Activated CD8-positive, alpha-beta memory T cell treated with anti-CD3 and anti-CD28 coated beads, Interleukin-2, amount 10 ng/mL, durations not matched to agents 7 days and 5 days (primary cell): ENCODE measurements at regions of chr17 and their contacts with region 1.

Region 1: GRCh38 chr17:28951991-28952975 is 965 bp upstream of the PHF12 start:
- DNase-seq: peak; percentile 98
- ATAC-seq: peak; percentile 73
- H3K4me3 Mint-ChIP-seq: no peak overlapping the region
- H3K27ac Mint-ChIP-seq: no peak overlapping the region
- H3K4me1 Mint-ChIP-seq: peaks cover 16% of the 10 kb centered on the region
- H3K27me3 Mint-ChIP-seq: no peaks in the 10 kb centered on the region

Region 2: DNA sequence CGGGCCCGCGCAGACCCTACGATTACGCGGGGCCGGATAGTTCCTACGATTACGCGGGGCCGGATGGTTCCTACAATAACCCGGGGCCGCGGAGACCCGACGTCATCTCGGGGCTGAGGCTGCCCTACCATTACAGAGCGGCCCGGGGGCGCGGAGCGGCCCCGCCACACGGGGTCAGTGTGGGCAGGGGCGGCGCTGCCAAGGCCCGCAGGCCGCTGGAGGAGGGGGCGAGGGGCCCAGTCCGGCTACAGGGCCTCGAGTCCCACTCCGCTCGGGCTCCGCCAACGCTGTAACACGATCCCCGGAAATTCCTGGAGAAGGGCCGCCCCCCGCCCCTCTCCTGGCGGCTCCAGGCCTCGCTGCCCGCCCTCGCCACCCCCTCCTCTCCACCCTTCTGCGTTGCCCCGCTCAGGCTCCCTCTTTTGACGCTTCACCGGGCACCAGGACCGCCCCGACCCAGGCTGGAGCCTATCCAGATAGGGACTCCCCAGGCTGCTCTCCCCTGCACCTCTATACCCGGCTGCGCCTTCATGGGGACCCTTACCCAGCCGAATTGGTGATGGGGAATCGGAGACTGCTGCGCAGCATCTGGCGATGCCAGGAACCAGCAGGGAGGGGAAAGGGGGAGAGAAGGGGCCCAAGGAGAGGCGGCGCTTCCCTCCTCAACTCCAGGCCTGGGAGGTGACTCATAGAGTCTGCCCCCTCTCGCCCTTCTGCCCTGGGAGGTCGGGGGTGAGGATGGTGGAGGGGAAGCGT is 234.5 kb before region 1 on chr17 and contains the start of gene RAB34:
- CTCF ChIA-PET with region 1: interaction called, 28 read pairs
- DNase-seq: no peak
- ATAC-seq: no peak
- H3K4me3 Mint-ChIP-seq: peak within 1 kb of the TSS; percentile 40
- H3K27ac Mint-ChIP-seq: peak within 1 kb of the TSS; percentile 24
- H3K4me1 Mint-ChIP-seq: peaks cover 29% of the 10 kb centered on the region
- H3K27me3 Mint-ChIP-seq: peaks cover 36% of the 10 kb centered on the region
- total RNA-seq, gene RAB34: 5.6 to 8.3 TPM

Region 3: DNA sequence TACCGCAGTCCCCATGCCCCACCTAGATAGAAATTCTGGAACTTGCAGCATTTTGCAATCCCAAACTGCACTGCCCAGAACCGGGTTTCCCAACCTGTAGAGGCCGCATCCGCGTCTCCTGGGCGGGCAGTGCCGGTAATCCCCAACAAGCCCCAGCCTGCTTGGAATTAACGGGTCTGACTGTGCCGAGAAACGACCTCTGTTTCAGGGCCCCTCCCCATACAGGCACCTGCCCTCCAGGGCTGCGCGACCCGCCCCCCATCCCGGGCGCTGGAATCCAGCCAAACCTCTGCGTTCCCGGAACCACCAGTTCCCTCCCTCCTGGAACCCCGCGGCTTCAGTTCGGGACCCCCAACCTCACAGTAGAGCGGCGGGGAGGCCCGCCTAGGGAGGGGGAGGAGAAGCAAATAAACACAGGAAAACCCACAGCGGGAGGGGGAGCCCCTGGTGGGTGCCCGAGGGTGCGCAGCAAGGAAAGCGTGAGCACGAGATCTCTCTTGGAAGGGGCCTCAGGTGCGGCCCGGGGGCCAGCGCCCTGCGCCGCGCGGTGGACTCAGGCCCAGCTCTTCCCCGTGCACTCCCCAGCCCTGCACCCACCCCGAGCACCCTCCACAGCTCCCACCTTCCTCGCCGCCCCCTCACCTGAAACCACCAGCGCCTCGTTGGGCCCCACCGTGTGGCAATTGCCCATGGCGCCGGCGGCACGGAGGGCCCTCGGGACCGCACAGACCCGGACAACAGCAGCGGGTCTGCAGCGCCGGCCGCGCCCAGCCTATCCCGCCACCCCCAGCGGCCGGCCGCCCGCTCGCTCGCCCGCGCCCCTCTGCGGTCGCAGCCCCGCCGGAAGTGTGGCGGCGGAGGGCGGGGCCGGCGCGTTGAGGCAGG is 55.2 kb before region 1 on chr17 and contains the start of gene FLOT2:
- CTCF ChIA-PET with region 1: interaction called, 18 read pairs
- DNase-seq: peak; percentile 78
- ATAC-seq: peak; percentile 69
- H3K4me3 Mint-ChIP-seq: peak within 1 kb of the TSS; percentile 91
- H3K27ac Mint-ChIP-seq: peak within 1 kb of the TSS; percentile 93
- H3K4me1 Mint-ChIP-seq: peaks cover 63% of the 10 kb centered on the region
- H3K27me3 Mint-ChIP-seq: no peaks in the 10 kb centered on the region
- total RNA-seq, gene FLOT2: 143 to 191 TPM

Region 4: DNA sequence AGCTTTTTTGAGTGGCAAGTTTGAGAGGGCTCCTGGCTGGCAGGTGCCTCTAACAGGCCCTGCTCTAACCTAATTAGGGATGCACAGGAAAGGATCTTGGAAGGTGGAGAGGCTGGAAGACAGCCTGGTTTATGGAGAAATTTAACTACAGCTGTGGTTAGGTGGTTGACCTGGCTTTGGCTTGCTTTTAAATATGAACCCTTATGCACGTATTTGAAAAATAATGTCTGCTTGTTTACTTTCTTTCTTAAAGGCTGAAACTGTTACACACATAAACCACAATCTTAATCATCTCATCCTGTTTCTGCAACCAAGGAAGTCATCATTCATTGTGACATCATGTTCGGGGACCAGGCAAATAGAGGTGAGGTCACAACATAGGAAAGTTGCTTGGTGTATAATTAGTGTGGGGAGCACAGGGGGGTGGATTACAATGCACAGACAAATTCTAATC is 26.3 kb before region 1 on chr17:
- CTCF ChIA-PET with region 1: interaction called, 34 read pairs
- DNase-seq: peak; percentile 73
- ATAC-seq: peak; percentile 93
- H3K4me3 Mint-ChIP-seq: peak overlapping the region; percentile 38
- H3K27ac Mint-ChIP-seq: peak overlapping the region; percentile 77
- H3K4me1 Mint-ChIP-seq: peaks cover 55% of the 10 kb centered on the region
- H3K27me3 Mint-ChIP-seq: no peaks in the 10 kb centered on the region

Region 5: DNA sequence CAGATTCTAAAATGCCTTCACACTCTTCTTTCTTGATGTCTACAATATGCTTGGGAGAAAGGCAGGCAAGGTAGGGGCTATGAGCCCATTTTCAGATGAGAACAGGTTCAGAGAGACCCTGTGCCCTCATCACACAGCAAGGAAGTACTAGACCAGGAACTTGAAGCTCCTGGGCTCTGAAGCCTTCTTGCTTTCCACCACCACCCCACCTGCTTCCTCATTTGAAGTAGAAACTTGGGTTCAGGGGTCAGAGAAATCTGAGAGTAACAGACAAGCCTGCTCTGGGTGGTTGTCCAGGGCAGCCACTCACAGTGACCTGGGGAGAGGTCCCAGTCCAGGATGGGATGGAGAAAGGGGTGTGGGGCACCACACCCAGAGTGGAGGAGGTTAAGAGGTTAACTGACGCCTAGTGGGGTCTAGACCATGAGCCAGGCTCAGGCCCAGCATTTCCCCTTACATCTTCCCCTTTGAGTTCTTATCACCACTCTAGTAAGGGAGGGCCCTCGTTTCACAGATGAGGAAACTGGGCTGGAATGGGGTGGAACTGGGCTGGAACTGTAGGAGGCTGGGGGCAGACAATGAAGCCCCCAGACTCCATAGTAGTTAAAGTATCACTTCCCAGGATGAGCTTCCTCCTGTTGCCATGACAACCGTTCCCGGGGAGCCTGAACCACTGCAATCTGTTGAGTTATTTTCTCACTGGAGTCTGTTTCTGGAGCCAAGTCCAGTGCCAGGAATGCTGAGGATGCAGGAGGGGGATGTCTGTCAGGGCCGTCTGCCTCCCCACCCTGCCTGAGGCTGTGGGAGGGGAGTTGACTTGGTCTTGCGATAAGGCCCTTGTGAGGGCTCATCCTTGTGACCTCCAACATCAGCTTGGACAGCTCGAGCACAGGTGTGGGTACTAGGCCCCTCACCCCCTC is 15.2 kb after region 1 on chr17:
- CTCF ChIA-PET with region 1: interaction called, 49 read pairs
- DNase-seq: no peak
- ATAC-seq: no peak
- H3K4me3 Mint-ChIP-seq: no peak overlapping the region
- H3K27ac Mint-ChIP-seq: no peak overlapping the region
- H3K4me1 Mint-ChIP-seq: no peaks in the 10 kb centered on the region
- H3K27me3 Mint-ChIP-seq: peaks cover 16% of the 10 kb centered on the region

Region 6: GRCh38 chr17:28992625-28993600 is 40.6 kb after region 1 on chr17:
- CTCF ChIA-PET with region 1: no interaction called
- DNase-seq: no peak
- ATAC-seq: peak; percentile 20
- H3K4me3 Mint-ChIP-seq: no peak overlapping the region
- H3K27ac Mint-ChIP-seq: no peak overlapping the region
- H3K4me1 Mint-ChIP-seq: no peaks in the 10 kb centered on the region
- H3K27me3 Mint-ChIP-seq: peaks cover 2% of the 10 kb centered on the region

Region 7: GRCh38 chr17:29096094-29096493 is 143.8 kb after region 1 on chr17:
- CTCF ChIA-PET with region 1: no interaction called
- DNase-seq: no peak
- ATAC-seq: no peak
- H3K4me3 Mint-ChIP-seq: no peak overlapping the region
- H3K27ac Mint-ChIP-seq: no peak overlapping the region
- H3K4me1 Mint-ChIP-seq: no peaks in the 10 kb centered on the region
- H3K27me3 Mint-ChIP-seq: no peaks in the 10 kb centered on the region

Region 8: GRCh38 chr17:29180034-29180787 is 227.9 kb after region 1 on chr17 and contains the start of gene MYO18A:
- CTCF ChIA-PET with region 1: interaction called, 11 read pairs
- DNase-seq: peak; percentile 84
- ATAC-seq: peak; percentile 94
- H3K4me3 Mint-ChIP-seq: peak within 1 kb of the TSS; percentile 33
- H3K27ac Mint-ChIP-seq: no peak within 1 kb of the TSS
- H3K4me1 Mint-ChIP-seq: peaks cover 34% of the 10 kb centered on the region
- H3K27me3 Mint-ChIP-seq: peaks cover 6% of the 10 kb centered on the region
- total RNA-seq, gene MYO18A: 67.7 to 85.8 TPM